Gastrocnemius medialis (tissue), 4 donors: ENCODE measurements at regions of chr15 and their contacts with region 1.

Region 1: GRCh38 chr15:101652098-101652782 is at the start of gene TM2D3:
- DNase-seq: peak; percentile 87 to 89
- ATAC-seq: peak; percentile 89 to 92
- H3K4me3 ChIP-seq: peak within 1 kb of the TSS; percentile 76 to 97 (median 92)
- H3K27ac ChIP-seq: peak within 1 kb of the TSS; percentile 94 to 99 (median 98)
- H3K4me1 ChIP-seq: peaks cover 22 to 33% of the 10 kb centered on the region in 2 donors
- H3K27me3 ChIP-seq: no peaks in the 10 kb centered on the region
- CTCF ChIP-seq: peak; percentile 75 to 96 (median 96)
- POLR2A ChIP-seq: peak; percentile 98 to 99
- total RNA-seq, gene TM2D3: 41.5 to 101 (median 51.9) TPM

Region 2: GRCh38 chr15:100602064-100602822 is 1050.0 kb before region 1 on chr15 and contains the starts of genes ASB7 and LINS1:
- in situ Hi-C with region 1: no loop called
- intact Hi-C with region 1: loop called (anchors 1 kb)
- DNase-seq: peak; percentile 100
- ATAC-seq: peak; percentile 96 to 97
- H3K4me3 ChIP-seq: peak within 1 kb of the TSS; percentile 82 to 98 (median 96)
- H3K27ac ChIP-seq: peak within 1 kb of the TSS; percentile 85 to 94 (median 92)
- H3K4me1 ChIP-seq: peaks cover 32 to 44% of the 10 kb centered on the region in 2 donors
- H3K27me3 ChIP-seq: no peaks in the 10 kb centered on the region
- CTCF ChIP-seq: no peak
- POLR2A ChIP-seq: peak; percentile 35 to 49
- total RNA-seq, gene ASB7: 5.1 to 10.3 (median 6.3) TPM
- total RNA-seq, gene LINS1: 3.2 to 11.9 (median 10.3) TPM

Region 3: GRCh38 chr15:101277038-101277882 is 375.0 kb before region 1 on chr15 and contains the start of gene SELENOS:
- in situ Hi-C with region 1: no loop called
- intact Hi-C with region 1: loop called (anchors 1 kb)
- DNase-seq: peak; percentile 88 to 89
- ATAC-seq: peak; percentile 83 to 85
- H3K4me3 ChIP-seq: peak within 1 kb of the TSS; percentile 77 to 88 (median 83)
- H3K27ac ChIP-seq: peak within 1 kb of the TSS; percentile 90 to 98 (median 94)
- H3K4me1 ChIP-seq: peaks cover 33 to 48% of the 10 kb centered on the region in 2 donors
- H3K27me3 ChIP-seq: no peaks in the 10 kb centered on the region
- CTCF ChIP-seq: peak in 1 of 5 experiments; percentile 11
- POLR2A ChIP-seq: peak; percentile 99 to 100
- total RNA-seq, gene SELENOS: 74.9 to 106 (median 89.1) TPM

Region 4: GRCh38 chr15:101294731-101295606 is 357.3 kb before region 1 on chr15 and contains the start of gene SNRPA1:
- in situ Hi-C with region 1: loop called in 2 of 4 experiments (anchors 5 to 10 kb)
- intact Hi-C with region 1: loop called (anchors 1 kb)
- DNase-seq: peak; percentile 96 to 97
- ATAC-seq: peak; percentile 90 to 93
- H3K4me3 ChIP-seq: peak within 1 kb of the TSS; percentile 71 to 99 (median 92)
- H3K27ac ChIP-seq: peak within 1 kb of the TSS; percentile 93 to 99 (median 98)
- H3K4me1 ChIP-seq: peaks cover 30 to 37% of the 10 kb centered on the region in 2 donors
- H3K27me3 ChIP-seq: no peaks in the 10 kb centered on the region
- CTCF ChIP-seq: peak in 2 of 5 experiments; percentile 5 to 22
- POLR2A ChIP-seq: peak; percentile 82 to 92
- total RNA-seq, gene SNRPA1: 19.6 to 59.1 (median 26.2) TPM

Region 5: GRCh38 chr15:101482526-101483371 is 169.5 kb before region 1 on chr15:
- in situ Hi-C with region 1: no loop called
- intact Hi-C with region 1: no loop called
- DNase-seq: peak; percentile 74 to 77
- ATAC-seq: peak; percentile 89 to 91
- H3K4me3 ChIP-seq: peak overlapping the region in 2 of 4 donors; percentile 22 to 26
- H3K27ac ChIP-seq: peak overlapping the region; percentile 81 to 97 (median 88)
- H3K4me1 ChIP-seq: peaks cover 27 to 32% of the 10 kb centered on the region in 2 donors
- H3K27me3 ChIP-seq: no peaks in the 10 kb centered on the region
- CTCF ChIP-seq: no peak
- POLR2A ChIP-seq: peak; percentile 35 to 81

Region 6: DNA sequence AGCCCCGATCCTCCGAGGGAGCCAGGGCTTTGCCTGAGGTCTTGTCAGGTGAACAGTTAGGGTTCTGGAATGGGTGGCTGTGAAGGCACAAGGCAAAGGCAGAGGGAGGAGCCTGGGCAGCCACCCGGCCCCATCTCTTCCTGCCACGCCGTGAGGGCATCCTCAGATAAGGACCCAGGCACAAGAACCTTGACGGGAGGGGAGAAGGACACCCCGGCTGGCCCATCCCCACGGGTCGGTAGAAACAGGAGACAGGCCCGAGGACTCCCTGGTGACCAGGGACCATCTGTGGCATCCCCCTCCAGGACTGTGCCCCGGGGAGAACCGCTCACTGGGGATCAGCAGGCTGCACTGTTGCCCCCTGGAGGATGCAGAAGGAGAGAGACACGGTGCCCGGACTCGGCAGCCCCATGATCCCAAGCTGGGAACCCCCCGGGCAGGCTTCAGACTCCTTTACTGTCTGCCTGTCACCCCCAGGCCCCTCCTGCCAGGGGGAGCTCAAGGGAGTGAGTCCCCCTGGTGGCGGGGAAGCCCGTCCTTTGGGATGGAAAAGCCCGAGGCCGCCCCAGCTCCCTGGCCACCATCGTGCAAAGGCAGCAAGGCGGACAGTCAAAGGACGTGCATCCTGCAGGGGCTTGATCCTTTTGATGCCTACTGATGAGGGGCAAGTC is 150.4 kb before region 1 on chr15:
- in situ Hi-C with region 1: no loop called
- intact Hi-C with region 1: loop called (anchors 5 kb)
- DNase-seq: peak in 1 of 2 donors; percentile 52
- ATAC-seq: no peak
- H3K4me3 ChIP-seq: no peak overlapping the region
- H3K27ac ChIP-seq: peak overlapping the region; percentile 56 to 95 (median 90)
- H3K4me1 ChIP-seq: peaks cover 31 to 35% of the 10 kb centered on the region in 2 donors
- H3K27me3 ChIP-seq: no peaks in the 10 kb centered on the region
- CTCF ChIP-seq: peak in 3 of 5 experiments; percentile 38 to 59 (median 56)
- POLR2A ChIP-seq: no peak

Region 7: GRCh38 chr15:101615986-101616848 is 36.0 kb before region 1 on chr15:
- in situ Hi-C with region 1: no loop called
- intact Hi-C with region 1: loop called (anchors 5 kb)
- DNase-seq: peak in 1 of 2 donors; percentile 73
- ATAC-seq: peak; percentile 14 to 26
- H3K4me3 ChIP-seq: peak overlapping the region in 3 of 4 donors; percentile 1 to 20 (median 6)
- H3K27ac ChIP-seq: peak overlapping the region; percentile 79 to 92 (median 81)
- H3K4me1 ChIP-seq: peaks cover 84 to 95% of the 10 kb centered on the region in 2 donors
- H3K27me3 ChIP-seq: no peaks in the 10 kb centered on the region
- CTCF ChIP-seq: no peak
- POLR2A ChIP-seq: no peak

Region 8: DNA sequence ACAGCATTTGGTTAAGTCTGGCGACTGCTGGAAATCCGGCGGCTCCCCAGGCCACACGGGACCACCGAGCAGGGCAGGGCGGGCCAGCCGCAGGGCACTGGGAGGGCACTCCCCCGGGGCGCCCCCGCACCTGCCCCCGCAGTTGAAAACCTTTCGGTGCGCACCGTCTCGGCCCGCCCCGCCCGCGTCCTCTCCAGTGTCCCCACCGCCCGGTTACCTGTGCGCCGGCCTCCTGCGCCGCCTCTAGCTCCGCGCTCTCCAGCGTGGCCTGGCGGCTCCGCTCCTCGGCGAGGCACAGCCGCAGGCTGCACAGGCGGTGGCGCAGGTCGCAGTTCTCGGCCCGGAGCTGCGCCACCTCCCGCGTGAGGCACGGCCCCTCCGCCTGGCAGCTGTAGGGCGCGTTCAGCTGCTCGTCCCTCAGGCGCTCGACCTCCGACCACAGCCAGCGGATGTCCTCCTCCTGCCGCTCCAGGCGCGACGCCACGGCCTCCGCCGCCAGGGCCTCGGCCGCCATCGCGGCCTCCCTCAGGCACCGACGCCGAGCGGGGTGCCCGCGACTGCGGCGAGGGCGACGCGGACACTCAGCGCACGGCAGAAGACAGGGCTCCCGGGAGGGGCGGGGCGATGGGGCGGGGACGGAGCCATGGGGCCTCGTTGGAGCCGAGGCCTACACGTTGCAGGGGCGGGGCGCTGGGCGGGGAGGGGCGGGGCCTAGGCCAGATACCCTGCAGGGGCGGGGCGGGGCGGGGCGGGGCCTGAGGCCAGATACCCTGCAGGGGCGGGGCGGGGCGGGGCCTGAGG is 71.8 kb after region 1 on chr15 and contains the start of gene TARS3:
- in situ Hi-C with region 1: no loop called
- intact Hi-C with region 1: loop called (anchors 5 kb)
- DNase-seq: peak; percentile 95
- ATAC-seq: peak; percentile 96 to 97
- H3K4me3 ChIP-seq: peak within 1 kb of the TSS; percentile 79 to 90 (median 84)
- H3K27ac ChIP-seq: peak within 1 kb of the TSS; percentile 90 to 97 (median 97)
- H3K4me1 ChIP-seq: peaks cover 12 to 14% of the 10 kb centered on the region in 2 donors
- H3K27me3 ChIP-seq: no peaks in the 10 kb centered on the region
- CTCF ChIP-seq: peak in 4 of 5 experiments; percentile 16 to 39 (median 24)
- POLR2A ChIP-seq: peak; percentile 94 to 96
- total RNA-seq, gene TARS3: 38.3 to 69.9 (median 55.4) TPM